ENCODE measurements at regions of chr19 and their contacts with region 1.

Region 1: DNA sequence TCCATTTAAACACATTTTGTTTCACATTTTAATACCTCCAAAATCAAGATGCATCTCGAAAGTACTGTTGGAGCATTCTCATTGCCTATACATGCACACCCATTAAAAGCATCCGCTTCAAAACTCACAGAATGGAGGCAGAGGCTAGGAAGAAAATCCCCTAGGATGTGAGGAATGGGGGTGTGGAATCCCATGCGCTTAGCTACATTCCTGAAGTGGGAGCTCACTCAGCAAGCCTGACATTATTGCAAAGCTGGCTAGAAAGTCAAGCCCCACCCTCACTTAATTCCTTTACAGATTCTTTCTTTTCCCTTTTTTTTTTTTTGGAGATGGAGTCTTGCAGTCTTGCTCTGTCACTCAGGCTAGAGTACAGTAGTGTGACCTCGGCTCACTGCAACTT is 4.6 kb upstream of the FAM32A start:
- DNase-seq: no peak
- ATAC-seq: no peak
- H3K4me3 ChIP-seq: no peak overlapping the region
- H3K27ac ChIP-seq: no peak overlapping the region
- H3K4me1 ChIP-seq: peaks cover 0 to 5% (median 0%) of the 10 kb centered on the region in 4 donors
- H3K27me3 ChIP-seq: no peaks in the 10 kb centered on the region
- CTCF ChIP-seq: no peak
- POLR2A ChIP-seq: no peak

Region 2: GRCh38 chr19:15631817-15632216 is 548.8 kb before region 1 on chr19:
- intact Hi-C with region 1: loop called in 1 of 2 experiments (anchors 10 kb)
- DNase-seq: peak in 2 of 3 donors; percentile 48 to 58
- ATAC-seq: peak in 3 of 4 donors; percentile 11 to 43 (median 37)
- H3K4me3 ChIP-seq: no peak overlapping the region
- H3K27ac ChIP-seq: no peak overlapping the region
- H3K4me1 ChIP-seq: peaks cover 0 to 42% (median 15%) of the 10 kb centered on the region in 4 donors
- H3K27me3 ChIP-seq: no peaks in the 10 kb centered on the region
- CTCF ChIP-seq: peak; percentile 30 to 59 (median 44)
- POLR2A ChIP-seq: no peak

Region 3: GRCh38 chr19:15926484-15926883 is 254.1 kb before region 1 on chr19:
- intact Hi-C with region 1: no loop called
- DNase-seq: peak; percentile 69 to 91 (median 88)
- ATAC-seq: peak; percentile 90 to 96 (median 94)
- H3K4me3 ChIP-seq: no peak overlapping the region
- H3K27ac ChIP-seq: peak overlapping the region in 2 of 3 donors; percentile 53 to 73
- H3K4me1 ChIP-seq: peaks cover 0 to 41% (median 13%) of the 10 kb centered on the region in 4 donors
- H3K27me3 ChIP-seq: no peaks in the 10 kb centered on the region
- CTCF ChIP-seq: peak in 2 of 4 donors; percentile 17 to 19
- POLR2A ChIP-seq: no peak

Region 4: GRCh38 chr19:16035601-16036297 is 144.9 kb before region 1 on chr19:
- intact Hi-C with region 1: loop called (anchors 5 to 10 kb)
- DNase-seq: no peak
- ATAC-seq: no peak
- H3K4me3 ChIP-seq: no peak overlapping the region
- H3K27ac ChIP-seq: no peak overlapping the region
- H3K4me1 ChIP-seq: no peaks in the 10 kb centered on the region
- H3K27me3 ChIP-seq: no peaks in the 10 kb centered on the region
- CTCF ChIP-seq: no peak
- POLR2A ChIP-seq: no peak

Region 5: GRCh38 chr19:16041299-16041990 is 139.2 kb before region 1 on chr19:
- intact Hi-C with region 1: loop called (anchors 5 to 10 kb)
- DNase-seq: peak; percentile 86 to 88 (median 87)
- ATAC-seq: peak; percentile 91 to 98 (median 95)
- H3K4me3 ChIP-seq: no peak overlapping the region
- H3K27ac ChIP-seq: no peak overlapping the region
- H3K4me1 ChIP-seq: peaks cover 0 to 18% (median 5%) of the 10 kb centered on the region in 4 donors
- H3K27me3 ChIP-seq: no peaks in the 10 kb centered on the region
- CTCF ChIP-seq: peak; percentile 95 to 99 (median 98)
- POLR2A ChIP-seq: no peak

Region 6: DNA sequence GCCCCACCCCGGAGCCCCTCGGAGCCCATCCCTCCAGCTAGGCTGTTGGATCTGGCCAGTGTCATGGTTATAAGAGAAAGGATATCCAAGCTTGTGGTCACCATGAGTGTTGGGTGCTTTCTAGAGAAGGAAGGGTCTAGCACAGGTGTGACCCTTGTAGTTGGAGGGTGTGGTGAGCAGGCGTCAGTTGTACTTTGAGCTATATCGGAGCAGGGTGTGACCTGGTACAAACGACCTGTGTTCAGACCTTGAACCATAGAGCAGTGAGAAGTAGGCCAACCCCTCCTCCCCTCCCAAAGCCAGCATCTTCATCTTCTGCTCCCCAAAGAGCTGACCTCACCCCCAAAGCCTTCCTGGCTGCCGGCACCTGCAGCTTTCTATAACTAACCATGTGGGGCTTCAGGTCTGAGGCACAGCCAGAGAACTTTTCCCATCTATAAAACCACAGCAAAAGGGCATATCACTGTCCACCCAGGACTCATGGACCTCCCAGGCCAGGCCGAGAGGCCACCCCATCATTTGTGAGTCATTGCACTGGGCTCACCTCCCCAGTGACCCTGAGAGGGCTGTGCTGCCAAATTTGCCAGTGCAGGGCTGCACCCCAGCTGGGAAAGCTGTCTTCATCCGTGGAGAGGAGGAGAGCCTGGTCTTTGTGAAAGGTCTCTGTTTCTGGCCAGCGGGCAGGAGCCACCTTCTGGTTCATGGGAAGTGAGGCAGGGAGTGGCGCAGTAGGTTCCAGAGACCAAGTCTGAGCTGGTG is 54.7 kb before region 1 on chr19:
- intact Hi-C with region 1: no loop called
- DNase-seq: no peak
- ATAC-seq: no peak
- H3K4me3 ChIP-seq: no peak overlapping the region
- H3K27ac ChIP-seq: no peak overlapping the region
- H3K4me1 ChIP-seq: no peaks in the 10 kb centered on the region
- H3K27me3 ChIP-seq: no peaks in the 10 kb centered on the region
- CTCF ChIP-seq: no peak
- POLR2A ChIP-seq: no peak

Region 7: GRCh38 chr19:16143399-16144245 is 37.0 kb before region 1 on chr19 and contains the start of gene HSH2D:
- intact Hi-C with region 1: no loop called
- DNase-seq: peak in 2 of 3 donors; percentile 67 to 81
- ATAC-seq: peak; percentile 65 to 80 (median 75)
- H3K4me3 ChIP-seq: peak within 1 kb of the TSS in 1 of 3 donors; percentile 21
- H3K27ac ChIP-seq: peak within 1 kb of the TSS in 2 of 3 donors; percentile 18 to 28
- H3K4me1 ChIP-seq: no peaks in the 10 kb centered on the region
- H3K27me3 ChIP-seq: no peaks in the 10 kb centered on the region
- CTCF ChIP-seq: no peak
- POLR2A ChIP-seq: no peak
- total RNA-seq, gene HSH2D: 0.26 to 1.7 (median 0.48) TPM

Region 8: DNA sequence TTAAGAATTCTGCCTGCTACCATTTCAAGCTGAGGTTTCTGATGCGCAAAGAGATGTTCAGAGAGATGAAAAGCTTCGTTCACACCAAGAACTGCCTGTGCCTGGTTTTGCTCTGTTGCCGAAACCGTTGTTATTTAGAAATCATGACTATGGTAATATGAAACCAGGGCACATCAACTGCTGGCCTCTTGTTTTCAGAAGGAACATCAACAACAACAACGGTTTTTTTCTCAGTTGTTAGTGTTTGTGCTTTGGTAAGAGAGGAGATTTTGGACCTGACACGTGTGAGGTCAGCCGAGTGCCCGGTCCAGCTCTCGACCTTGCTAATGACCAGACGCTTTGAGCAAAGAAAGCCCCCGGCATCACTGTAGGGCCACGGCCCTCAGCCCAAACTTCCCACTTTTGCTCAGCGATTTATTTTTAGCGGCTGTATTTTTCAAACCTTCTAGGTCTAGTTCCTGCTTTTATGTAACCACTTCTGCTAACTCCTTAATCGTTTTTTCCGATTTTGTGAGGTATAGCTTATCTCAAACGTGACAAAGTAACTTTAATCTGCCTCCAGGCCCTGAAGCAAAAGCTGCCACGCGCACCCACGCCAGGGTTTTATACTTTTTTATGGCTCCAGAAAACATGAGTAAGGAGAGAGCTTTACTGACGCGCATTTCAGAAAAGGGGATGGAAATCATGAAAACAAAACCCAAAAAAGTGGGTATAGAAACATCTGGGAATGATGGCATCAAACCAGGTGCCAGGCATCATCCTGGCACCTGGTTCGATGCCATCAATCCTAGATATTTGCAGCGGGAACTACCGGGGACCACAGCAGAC is 186.0 kb after region 1 on chr19:
- intact Hi-C with region 1: no loop called
- DNase-seq: no peak
- ATAC-seq: peak in 2 of 4 donors; percentile 8 to 12
- H3K4me3 ChIP-seq: no peak overlapping the region
- H3K27ac ChIP-seq: peak overlapping the region in 2 of 3 donors; percentile 27 to 34
- H3K4me1 ChIP-seq: peaks cover 0 to 20% (median 9%) of the 10 kb centered on the region in 4 donors
- H3K27me3 ChIP-seq: no peaks in the 10 kb centered on the region
- CTCF ChIP-seq: no peak
- POLR2A ChIP-seq: no peak